Caco-2 (cell line): ENCODE measurements at regions of chrX and their contacts with region 1.

Region 1: GRCh38 chrX:155026726-155027508 is at the start of gene FUNDC2:
- DNase-seq: peak; percentile 93 to 94
- H3K4me3 ChIP-seq: peak within 1 kb of the TSS; percentile 64
- H3K4me3 Mint-ChIP-seq: peak within 1 kb of the TSS; percentile 74
- H3K27ac Mint-ChIP-seq: peak within 1 kb of the TSS; percentile 76
- H3K4me1 ChIP-seq: no peaks in the 10 kb centered on the region
- H3K4me1 Mint-ChIP-seq: peaks cover 13% of the 10 kb centered on the region
- H3K27me3 ChIP-seq: no peaks in the 10 kb centered on the region
- H3K27me3 Mint-ChIP-seq: no peaks in the 10 kb centered on the region
- CTCF ChIP-seq: no peak
- total RNA-seq, gene FUNDC2: 47.3 and 52.9 TPM in 2 replicates

Region 2: DNA sequence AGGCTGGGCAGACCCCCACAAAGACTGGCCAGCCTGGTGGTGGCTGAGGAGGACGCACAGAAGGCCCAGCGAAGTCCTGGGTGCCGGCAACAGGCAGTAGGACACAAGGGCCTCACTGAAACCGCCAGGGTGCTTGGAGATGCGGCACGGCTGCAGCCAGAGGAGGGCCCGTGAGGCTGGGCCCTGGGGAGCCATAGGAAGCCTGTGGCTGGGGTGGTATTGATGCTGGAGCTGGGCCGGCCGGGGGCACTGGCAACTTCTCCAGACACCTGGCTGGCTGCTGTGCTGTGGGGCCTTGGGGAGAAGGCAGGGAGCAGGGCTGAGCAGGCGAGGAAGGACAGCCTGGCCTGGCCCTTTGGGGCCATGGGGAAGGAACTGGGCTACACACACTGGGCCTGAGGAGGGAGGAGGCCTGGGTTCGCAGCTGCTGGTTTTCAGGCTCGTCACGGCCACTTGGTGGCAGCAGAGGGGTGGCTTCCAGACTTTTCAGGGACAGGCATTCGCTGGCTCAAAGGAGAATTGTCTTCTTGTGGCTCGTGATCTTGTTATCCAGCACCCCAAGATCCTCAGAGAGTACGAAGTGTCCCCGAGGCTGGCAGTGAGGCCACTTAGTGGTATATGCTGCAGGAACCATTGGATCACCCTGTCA is 1472.3 kb before region 1 on chrX:
- CTCF ChIA-PET with region 1: no interaction called
- POLR2A ChIA-PET with region 1: interaction called, 12 read pairs
- intact Hi-C with region 1: no loop called
- DNase-seq: peak; percentile 68 to 72
- H3K4me3 ChIP-seq: no peak overlapping the region
- H3K4me3 Mint-ChIP-seq: no peak overlapping the region
- H3K27ac Mint-ChIP-seq: no peak overlapping the region
- H3K4me1 ChIP-seq: no peaks in the 10 kb centered on the region
- H3K4me1 Mint-ChIP-seq: no peaks in the 10 kb centered on the region
- H3K27me3 ChIP-seq: no peaks in the 10 kb centered on the region
- H3K27me3 Mint-ChIP-seq: peaks cover 2% of the 10 kb centered on the region
- CTCF ChIP-seq: peak; percentile 65 to 78

Region 3: DNA sequence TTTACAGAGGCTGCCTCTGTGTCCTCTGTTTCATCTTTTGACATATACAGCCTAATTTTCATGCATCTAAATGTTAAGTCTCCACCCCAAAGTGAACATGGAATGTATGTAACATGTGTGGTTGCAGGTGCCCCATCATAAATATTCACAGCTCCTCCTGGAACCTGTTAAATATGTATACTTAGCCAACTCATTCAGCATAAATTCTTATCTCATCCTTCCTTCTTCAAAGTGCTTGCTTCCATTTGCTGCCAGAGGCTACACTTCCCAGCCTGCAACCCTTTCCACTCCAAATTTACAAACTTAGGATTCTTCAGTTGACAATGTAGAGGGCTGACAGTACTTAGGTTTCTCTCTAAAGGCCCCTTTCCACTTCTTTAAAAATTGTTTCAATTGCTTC is 65.0 kb before region 1 on chrX:
- CTCF ChIA-PET with region 1: no interaction called
- POLR2A ChIA-PET with region 1: interaction called, 13 read pairs
- intact Hi-C with region 1: no loop called
- DNase-seq: no peak
- H3K4me3 ChIP-seq: no peak overlapping the region
- H3K4me3 Mint-ChIP-seq: no peak overlapping the region
- H3K27ac Mint-ChIP-seq: no peak overlapping the region
- H3K4me1 ChIP-seq: no peaks in the 10 kb centered on the region
- H3K4me1 Mint-ChIP-seq: no peaks in the 10 kb centered on the region
- H3K27me3 ChIP-seq: no peaks in the 10 kb centered on the region
- H3K27me3 Mint-ChIP-seq: peaks cover 3% of the 10 kb centered on the region
- CTCF ChIP-seq: no peak

Region 4: GRCh38 chrX:155070975-155071693 is 44.2 kb after region 1 on chrX and contains the starts of genes BRCC3, CMC4 and MTCP1:
- CTCF ChIA-PET with region 1: no interaction called
- POLR2A ChIA-PET with region 1: interaction called, 11 read pairs
- intact Hi-C with region 1: loop called (anchors 1 kb)
- DNase-seq: peak; percentile 80 to 88
- H3K4me3 ChIP-seq: peak within 1 kb of the TSS; percentile 57
- H3K4me3 Mint-ChIP-seq: peak within 1 kb of the TSS; percentile 89
- H3K27ac Mint-ChIP-seq: peak within 1 kb of the TSS; percentile 90
- H3K4me1 ChIP-seq: peaks cover 6% of the 10 kb centered on the region; the same call in 1 of the 2 replicates
- H3K4me1 Mint-ChIP-seq: peaks cover 7% of the 10 kb centered on the region
- H3K27me3 ChIP-seq: no peaks in the 10 kb centered on the region
- H3K27me3 Mint-ChIP-seq: no peaks in the 10 kb centered on the region
- CTCF ChIP-seq: no peak
- total RNA-seq, gene BRCC3: 30.4 and 32.3 TPM in 2 replicates
- total RNA-seq, gene CMC4: 1.7 and 1.8 TPM in 2 replicates
- total RNA-seq, gene MTCP1: 11.3 and 11.7 TPM in 2 replicates

Region 5: GRCh38 chrX:155112171-155112570 is 85.3 kb after region 1 on chrX:
- CTCF ChIA-PET with region 1: no interaction called
- POLR2A ChIA-PET with region 1: interaction called, 13 read pairs
- intact Hi-C with region 1: no loop called
- DNase-seq: no peak
- H3K4me3 ChIP-seq: no peak overlapping the region
- H3K4me3 Mint-ChIP-seq: no peak overlapping the region
- H3K27ac Mint-ChIP-seq: no peak overlapping the region
- H3K4me1 ChIP-seq: no peaks in the 10 kb centered on the region
- H3K4me1 Mint-ChIP-seq: no peaks in the 10 kb centered on the region
- H3K27me3 ChIP-seq: no peaks in the 10 kb centered on the region
- H3K27me3 Mint-ChIP-seq: no peaks in the 10 kb centered on the region
- CTCF ChIP-seq: no peak

Region 6: GRCh38 chrX:155216179-155216939 is 189.4 kb after region 1 on chrX and contains the start of gene VBP1:
- CTCF ChIA-PET with region 1: no interaction called
- POLR2A ChIA-PET with region 1: interaction called, 12 read pairs
- intact Hi-C with region 1: no loop called
- DNase-seq: peak; percentile 90 to 94
- H3K4me3 ChIP-seq: peak within 1 kb of the TSS; percentile 80
- H3K4me3 Mint-ChIP-seq: peak within 1 kb of the TSS; percentile 99
- H3K27ac Mint-ChIP-seq: peak within 1 kb of the TSS; percentile 93
- H3K4me1 ChIP-seq: no peaks in the 10 kb centered on the region
- H3K4me1 Mint-ChIP-seq: peaks cover 8% of the 10 kb centered on the region
- H3K27me3 ChIP-seq: no peaks in the 10 kb centered on the region
- H3K27me3 Mint-ChIP-seq: no peaks in the 10 kb centered on the region
- CTCF ChIP-seq: peak; percentile 43 to 57
- total RNA-seq, gene VBP1: 54.8 and 56.8 TPM in 2 replicates